Natural killer cell (primary cell): ENCODE measurements at regions of chr10 and their contacts with region 1.

Region 1: DNA sequence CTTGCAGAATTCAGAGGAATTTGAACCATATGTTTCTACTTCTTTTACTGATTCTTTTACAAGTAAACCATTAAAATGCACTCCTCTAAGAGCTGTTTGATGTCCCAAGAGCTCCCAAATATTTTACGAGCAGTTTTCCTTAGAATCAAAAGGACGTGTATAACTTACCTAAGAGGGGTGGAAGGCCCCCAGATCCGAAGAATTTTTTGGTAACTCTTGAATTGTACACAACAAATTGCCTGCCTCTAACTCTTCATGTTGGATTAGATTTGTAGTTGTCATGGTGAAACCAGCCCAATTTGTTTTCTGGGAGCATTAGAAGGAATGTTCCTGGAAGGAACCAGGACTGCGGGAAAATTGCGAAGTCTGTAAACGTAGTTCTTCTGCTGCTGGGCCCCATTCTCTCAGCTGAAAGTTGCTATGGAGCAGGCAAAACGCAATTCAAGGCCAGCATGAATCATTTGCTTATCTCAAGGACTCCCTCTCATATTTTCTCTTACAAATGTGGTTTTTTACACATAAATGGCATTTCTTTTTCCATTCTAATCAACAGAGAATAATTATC is 124.8 kb upstream of the TMEM72 start:
- DNase-seq: no peak
- ATAC-seq: no peak
- H3K4me3 ChIP-seq: no peak overlapping the region
- H3K4me3 Mint-ChIP-seq: no peak overlapping the region
- H3K27ac ChIP-seq: no peak overlapping the region
- H3K27ac Mint-ChIP-seq: no peak overlapping the region
- H3K4me1 ChIP-seq: no peaks in the 10 kb centered on the region
- H3K4me1 Mint-ChIP-seq: no peaks in the 10 kb centered on the region
- H3K27me3 ChIP-seq: no peaks in the 10 kb centered on the region
- H3K27me3 Mint-ChIP-seq: peaks cover 8 to 14% of the 10 kb centered on the region in 2 donors
- CTCF ChIP-seq: no peak

Region 2: GRCh38 chr10:44835300-44835699 is 48.9 kb after region 1 on chr10:
- intact Hi-C with region 1: loop called (anchors 5 kb)
- DNase-seq: no peak
- ATAC-seq: no peak
- H3K4me3 ChIP-seq: no peak overlapping the region
- H3K4me3 Mint-ChIP-seq: no peak overlapping the region
- H3K27ac ChIP-seq: no peak overlapping the region
- H3K27ac Mint-ChIP-seq: no peak overlapping the region
- H3K4me1 ChIP-seq: no peaks in the 10 kb centered on the region
- H3K4me1 Mint-ChIP-seq: no peaks in the 10 kb centered on the region
- H3K27me3 ChIP-seq: peaks cover 3% of the 10 kb centered on the region
- H3K27me3 Mint-ChIP-seq: peaks cover 6 to 16% of the 10 kb centered on the region in 2 donors
- CTCF ChIP-seq: no peak